Naive thymus-derived CD4-positive, alpha-beta T cell (primary cell): ENCODE measurements at regions of chr9 and their contacts with region 1.

Region 1: DNA sequence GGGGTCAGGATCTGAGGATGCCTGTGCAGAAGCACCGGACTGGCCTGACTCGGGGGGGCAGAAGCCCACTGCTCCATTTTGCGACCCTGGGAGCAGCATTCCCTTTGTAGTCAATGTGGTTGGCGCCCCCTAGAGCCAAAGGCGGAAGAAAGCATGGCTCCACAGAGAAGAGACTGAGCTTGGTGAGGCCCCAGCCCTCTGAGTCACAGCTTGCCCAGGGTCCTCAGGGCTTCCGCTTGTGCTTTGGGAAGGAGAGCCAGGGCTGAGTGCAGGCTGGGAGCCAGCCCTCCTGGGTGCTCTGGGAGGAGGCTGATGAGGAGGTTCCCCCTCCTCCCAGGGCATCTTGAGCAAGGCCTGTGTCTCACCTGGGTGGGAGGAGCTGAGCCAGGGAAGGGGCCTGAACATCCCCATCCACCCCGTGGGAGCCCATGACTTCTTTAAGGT is 5.5 kb upstream of the AQP3 start:
- DNase-seq: peak in 4 of 9 donors; percentile 25 to 51 (median 40)
- ATAC-seq: peak; percentile 63
- H3K4me3 ChIP-seq: no peak overlapping the region
- H3K4me3 Mint-ChIP-seq: peak overlapping the region in 5 of 10 donors; percentile 25 to 67 (median 36)
- H3K27ac ChIP-seq: peak overlapping the region; percentile 37
- H3K27ac Mint-ChIP-seq: peak overlapping the region in 8 of 9 donors; percentile 59 to 95 (median 82)
- H3K4me1 ChIP-seq: peaks cover 39 to 56% of the 10 kb centered on the region in 2 donors
- H3K4me1 Mint-ChIP-seq: peaks cover 40 to 64% (median 56%) of the 10 kb centered on the region in 7 donors
- H3K27me3 ChIP-seq: no peaks in the 10 kb centered on the region
- H3K27me3 Mint-ChIP-seq: no peaks in the 10 kb centered on the region

Region 2: GRCh38 chr9:33439731-33440130 is 13.1 kb before region 1 on chr9:
- CTCF ChIA-PET with region 1: interaction called, 3 read pairs
- POLR2A ChIA-PET with region 1: interaction called, 10 read pairs
- intact Hi-C with region 1: no loop called
- DNase-seq: no peak
- ATAC-seq: no peak
- H3K4me3 ChIP-seq: no peak overlapping the region
- H3K4me3 Mint-ChIP-seq: no peak overlapping the region
- H3K27ac ChIP-seq: no peak overlapping the region
- H3K27ac Mint-ChIP-seq: peak overlapping the region in 4 of 9 donors; percentile 19 to 49 (median 35)
- H3K4me1 ChIP-seq: peaks cover 1 to 10% of the 10 kb centered on the region in 2 donors
- H3K4me1 Mint-ChIP-seq: peaks cover 4 to 70% (median 19%) of the 10 kb centered on the region in 7 donors
- H3K27me3 ChIP-seq: no peaks in the 10 kb centered on the region
- H3K27me3 Mint-ChIP-seq: no peaks in the 10 kb centered on the region

Region 3: DNA sequence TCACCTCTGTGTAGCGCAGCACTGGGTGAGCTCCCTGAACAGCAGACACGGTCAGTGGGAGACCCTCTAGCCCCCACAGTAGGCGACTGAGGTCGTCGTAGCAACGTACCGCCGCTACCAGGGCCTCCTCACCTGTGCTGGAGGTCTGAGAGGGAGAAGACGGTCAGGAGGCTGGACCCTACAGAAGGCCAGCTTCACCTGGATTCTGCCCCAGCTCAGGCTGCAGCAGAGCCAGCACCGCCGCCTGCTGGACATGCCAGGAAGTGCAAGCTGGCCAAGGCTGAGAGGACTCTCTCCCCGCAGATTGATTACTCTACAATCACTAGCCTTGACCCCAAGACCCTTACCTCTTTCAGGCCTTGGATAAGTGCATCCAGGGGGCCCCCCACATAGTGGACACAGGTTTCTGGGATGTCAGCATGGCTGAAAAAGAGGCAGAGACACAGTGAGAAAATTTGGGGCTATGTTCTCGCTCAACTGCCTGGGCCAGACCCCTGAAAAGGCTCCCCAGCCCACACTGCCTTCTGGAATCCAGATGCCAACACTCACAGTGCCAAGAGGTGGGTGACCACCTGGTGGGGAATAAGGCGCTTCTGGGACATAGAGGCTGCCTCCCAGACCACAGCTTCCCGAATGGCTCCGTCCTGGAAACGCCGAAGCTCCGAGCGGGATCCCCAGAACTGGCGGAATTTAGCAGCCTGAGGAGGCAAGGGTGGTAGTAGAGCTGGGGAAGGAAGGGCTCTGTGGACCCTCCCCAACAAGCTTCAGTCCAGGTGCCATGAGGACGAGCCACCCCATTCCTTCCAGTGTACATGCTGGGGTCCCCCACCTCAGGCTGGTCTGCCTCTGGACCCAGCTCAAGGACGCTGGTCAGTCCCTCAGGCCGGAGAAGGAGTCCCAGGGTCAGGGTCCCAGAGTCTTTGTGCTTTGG is 14.0 kb after region 1 on chr9:
- CTCF ChIA-PET with region 1: interaction called, 52 read pairs
- POLR2A ChIA-PET with region 1: interaction called, 32 read pairs
- intact Hi-C with region 1: no loop called
- DNase-seq: peak; percentile 42 to 82 (median 67)
- ATAC-seq: peak; percentile 84
- H3K4me3 ChIP-seq: no peak overlapping the region
- H3K4me3 Mint-ChIP-seq: peak overlapping the region in 1 of 10 donors; percentile 31
- H3K27ac ChIP-seq: peak overlapping the region; percentile 18
- H3K27ac Mint-ChIP-seq: peak overlapping the region in 6 of 9 donors; percentile 31 to 76 (median 43)
- H3K4me1 ChIP-seq: no peaks in the 10 kb centered on the region
- H3K4me1 Mint-ChIP-seq: peaks cover 5 to 12% (median 7%) of the 10 kb centered on the region in 7 donors
- H3K27me3 ChIP-seq: no peaks in the 10 kb centered on the region
- H3K27me3 Mint-ChIP-seq: no peaks in the 10 kb centered on the region

Region 4: DNA sequence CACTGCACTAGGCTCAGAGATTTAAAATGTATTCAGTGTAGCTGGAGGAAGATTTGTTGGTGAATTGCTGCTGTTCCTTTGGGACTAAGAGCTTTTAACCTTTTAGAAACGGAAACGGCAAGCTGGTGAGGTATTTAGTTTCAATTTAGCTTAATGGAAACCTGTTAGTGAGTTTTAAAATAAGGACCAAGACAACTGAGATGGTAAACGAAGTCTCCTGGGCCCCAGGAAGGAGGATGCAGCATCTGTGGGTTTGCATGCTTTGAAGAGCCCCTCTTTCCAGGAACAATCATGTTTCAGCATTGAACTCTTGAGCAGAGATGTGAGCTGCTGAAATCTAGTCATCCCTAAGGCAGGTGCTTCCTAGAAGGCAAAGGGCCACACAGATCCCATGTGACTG is 1022.2 kb after region 1 on chr9:
- CTCF ChIA-PET with region 1: no interaction called
- POLR2A ChIA-PET with region 1: no interaction called
- intact Hi-C with region 1: no loop called
- DNase-seq: no peak
- ATAC-seq: no peak
- H3K4me3 ChIP-seq: no peak overlapping the region
- H3K4me3 Mint-ChIP-seq: no peak overlapping the region
- H3K27ac ChIP-seq: no peak overlapping the region
- H3K27ac Mint-ChIP-seq: no peak overlapping the region
- H3K4me1 ChIP-seq: no peaks in the 10 kb centered on the region
- H3K4me1 Mint-ChIP-seq: peaks cover 0 to 3% (median 0%) of the 10 kb centered on the region in 7 donors
- H3K27me3 ChIP-seq: no peaks in the 10 kb centered on the region
- H3K27me3 Mint-ChIP-seq: peaks cover 4 to 20% (median 9%) of the 10 kb centered on the region in 5 donors